Activated naive CD4-positive, alpha-beta T cell treated with anti-CD3 and anti-CD28 coated beads for 36 hours (primary cell): ENCODE measurements at regions of chr10 and their contacts with region 1.

Region 1: GRCh38 chr10:113385021-113385999 is 167.5 kb upstream of the HABP2 start:
- DNase-seq: peak; percentile 72
- H3K4me3 Mint-ChIP-seq: no peak overlapping the region
- H3K27ac Mint-ChIP-seq: no peak overlapping the region
- H3K4me1 Mint-ChIP-seq: peaks cover 23% of the 10 kb centered on the region
- H3K27me3 Mint-ChIP-seq: peaks cover 2% of the 10 kb centered on the region

Region 2: DNA sequence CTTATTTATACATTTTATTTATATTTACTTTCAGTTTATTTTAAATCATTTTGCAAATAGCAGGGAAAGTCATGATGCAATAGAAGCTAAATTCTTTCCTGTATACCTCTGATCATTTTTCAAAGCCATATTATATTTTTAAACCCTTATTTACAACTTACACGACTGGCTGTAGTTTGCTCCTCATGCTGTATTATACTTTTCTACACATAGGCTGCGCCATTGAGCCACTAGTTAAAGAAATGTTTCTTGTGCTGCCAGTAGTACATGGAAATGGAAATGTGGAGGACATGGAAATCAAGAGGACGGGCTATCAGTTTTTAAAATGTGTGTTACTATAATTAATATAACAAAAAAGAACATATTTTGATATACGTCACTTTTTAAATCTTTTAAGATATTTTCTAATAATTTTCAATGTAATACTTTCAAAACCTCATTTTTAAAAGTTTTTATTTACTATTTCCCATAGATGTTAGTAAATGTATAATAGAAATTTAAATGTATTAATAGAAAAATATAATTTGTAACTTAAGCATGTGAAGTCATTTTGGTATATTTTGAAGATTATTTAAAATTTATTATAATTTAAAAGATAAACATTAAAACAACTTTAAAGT is 819.8 kb before region 1 on chr10:
- CTCF ChIA-PET with region 1: no interaction called
- intact Hi-C with region 1: loop called (anchors 1 kb)
- DNase-seq: peak; percentile 36
- H3K4me3 Mint-ChIP-seq: no peak overlapping the region
- H3K27ac Mint-ChIP-seq: no peak overlapping the region
- H3K4me1 Mint-ChIP-seq: no peaks in the 10 kb centered on the region
- H3K27me3 Mint-ChIP-seq: no peaks in the 10 kb centered on the region

Region 3: GRCh38 chr10:112721080-112721698 is 664.1 kb before region 1 on chr10:
- CTCF ChIA-PET with region 1: no interaction called
- intact Hi-C with region 1: loop called (anchors 1 kb)
- DNase-seq: peak; percentile 14
- H3K4me3 Mint-ChIP-seq: no peak overlapping the region
- H3K27ac Mint-ChIP-seq: no peak overlapping the region
- H3K4me1 Mint-ChIP-seq: no peaks in the 10 kb centered on the region
- H3K27me3 Mint-ChIP-seq: no peaks in the 10 kb centered on the region

Region 4: DNA sequence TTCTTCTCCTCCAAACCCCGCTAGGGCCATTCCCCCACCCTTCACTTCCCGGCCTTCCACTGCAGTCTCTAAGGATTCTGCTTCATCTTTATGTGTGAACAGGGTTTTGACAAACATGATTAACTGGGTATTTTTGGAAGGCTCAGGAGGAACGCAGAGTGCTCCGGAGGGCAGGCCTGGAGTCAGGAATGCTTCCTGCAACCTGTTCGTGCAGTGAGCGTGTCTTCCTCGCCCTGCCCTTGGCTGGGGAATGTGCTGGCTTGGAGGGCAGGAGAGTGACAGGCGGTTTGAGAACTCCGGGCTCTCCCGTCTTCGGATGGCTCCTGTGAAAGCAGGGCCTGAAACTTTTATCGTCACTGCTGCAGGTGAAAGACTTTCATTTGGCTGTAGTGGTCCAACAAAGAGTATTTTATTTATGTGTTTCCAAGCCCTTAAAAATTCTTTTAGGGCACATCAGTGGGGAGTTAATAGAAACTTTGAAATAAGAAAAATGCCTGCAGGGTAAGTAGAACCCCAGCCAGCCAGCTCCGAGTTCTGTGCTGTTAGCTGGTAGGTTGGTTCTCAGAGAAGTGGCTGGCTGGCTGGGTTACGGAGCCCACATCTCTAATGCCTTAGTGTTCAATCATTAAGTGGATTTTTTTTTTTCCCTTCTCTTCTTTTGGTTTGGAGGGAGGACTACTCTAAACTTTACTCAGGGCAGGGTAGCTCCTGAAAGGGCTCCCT is 384.3 kb before region 1 on chr10:
- CTCF ChIA-PET with region 1: no interaction called
- intact Hi-C with region 1: no loop called
- DNase-seq: no peak
- H3K4me3 Mint-ChIP-seq: no peak overlapping the region
- H3K27ac Mint-ChIP-seq: no peak overlapping the region
- H3K4me1 Mint-ChIP-seq: no peaks in the 10 kb centered on the region
- H3K27me3 Mint-ChIP-seq: peaks cover 42% of the 10 kb centered on the region

Region 5: DNA sequence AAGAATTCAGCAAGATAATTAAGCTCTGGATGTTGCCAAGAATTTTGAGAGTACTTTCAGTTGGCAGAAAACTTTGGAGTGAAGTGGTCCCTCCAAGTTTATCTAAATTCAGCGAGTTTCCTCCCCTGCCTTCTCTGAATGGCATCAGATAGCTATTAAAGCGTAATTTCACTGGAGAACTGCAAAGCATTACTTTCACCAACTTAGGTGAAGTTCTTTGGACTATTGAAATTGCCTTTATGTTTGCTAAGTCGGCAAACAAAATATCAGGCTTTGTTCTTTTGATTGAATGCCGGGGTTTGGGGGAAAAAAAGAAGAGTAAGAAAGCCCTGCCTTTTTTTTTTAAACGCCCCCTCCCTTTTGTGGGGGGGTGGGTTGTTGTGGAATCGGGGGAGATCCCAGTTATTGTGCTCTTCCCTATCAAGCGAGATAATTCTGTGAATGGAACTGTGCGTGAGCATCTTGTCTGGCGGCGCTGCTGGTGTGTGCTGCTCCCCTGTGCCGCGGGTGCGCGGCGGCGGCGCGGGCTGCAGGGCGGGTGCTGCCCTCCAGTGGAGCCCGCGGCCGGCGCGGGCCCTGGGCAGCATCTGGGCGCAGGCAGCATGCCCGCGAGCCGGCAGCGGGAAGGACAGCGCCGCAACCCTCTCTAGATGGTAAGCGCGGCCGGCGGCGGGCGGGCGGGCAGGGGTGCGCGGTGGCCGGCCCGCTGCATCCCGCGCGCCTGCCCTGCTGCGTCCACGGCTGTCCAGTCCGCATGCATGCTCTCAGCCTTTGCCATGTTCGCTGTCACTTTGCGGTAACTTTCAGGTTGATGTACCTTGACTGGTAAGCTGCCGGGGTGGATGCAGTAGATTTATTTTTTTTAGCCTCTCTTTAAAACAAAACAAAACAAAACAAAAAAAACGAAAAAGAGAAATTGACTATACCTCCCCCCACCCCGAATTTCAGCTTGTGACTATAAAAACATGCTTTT is 258.8 kb before region 1 on chr10:
- CTCF ChIA-PET with region 1: interaction called, 7 read pairs
- intact Hi-C with region 1: loop called (anchors 2 kb)
- DNase-seq: peak; percentile 60
- H3K4me3 Mint-ChIP-seq: no peak overlapping the region
- H3K27ac Mint-ChIP-seq: no peak overlapping the region
- H3K4me1 Mint-ChIP-seq: peaks cover 4% of the 10 kb centered on the region
- H3K27me3 Mint-ChIP-seq: peaks cover 45% of the 10 kb centered on the region

Region 6: GRCh38 chr10:113216102-113216501 is 169.2 kb before region 1 on chr10:
- CTCF ChIA-PET with region 1: interaction called, 8 read pairs
- intact Hi-C with region 1: loop called (anchors 1 kb)
- DNase-seq: no peak
- H3K4me3 Mint-ChIP-seq: no peak overlapping the region
- H3K27ac Mint-ChIP-seq: no peak overlapping the region
- H3K4me1 Mint-ChIP-seq: no peaks in the 10 kb centered on the region
- H3K27me3 Mint-ChIP-seq: peaks cover 23% of the 10 kb centered on the region

Region 7: DNA sequence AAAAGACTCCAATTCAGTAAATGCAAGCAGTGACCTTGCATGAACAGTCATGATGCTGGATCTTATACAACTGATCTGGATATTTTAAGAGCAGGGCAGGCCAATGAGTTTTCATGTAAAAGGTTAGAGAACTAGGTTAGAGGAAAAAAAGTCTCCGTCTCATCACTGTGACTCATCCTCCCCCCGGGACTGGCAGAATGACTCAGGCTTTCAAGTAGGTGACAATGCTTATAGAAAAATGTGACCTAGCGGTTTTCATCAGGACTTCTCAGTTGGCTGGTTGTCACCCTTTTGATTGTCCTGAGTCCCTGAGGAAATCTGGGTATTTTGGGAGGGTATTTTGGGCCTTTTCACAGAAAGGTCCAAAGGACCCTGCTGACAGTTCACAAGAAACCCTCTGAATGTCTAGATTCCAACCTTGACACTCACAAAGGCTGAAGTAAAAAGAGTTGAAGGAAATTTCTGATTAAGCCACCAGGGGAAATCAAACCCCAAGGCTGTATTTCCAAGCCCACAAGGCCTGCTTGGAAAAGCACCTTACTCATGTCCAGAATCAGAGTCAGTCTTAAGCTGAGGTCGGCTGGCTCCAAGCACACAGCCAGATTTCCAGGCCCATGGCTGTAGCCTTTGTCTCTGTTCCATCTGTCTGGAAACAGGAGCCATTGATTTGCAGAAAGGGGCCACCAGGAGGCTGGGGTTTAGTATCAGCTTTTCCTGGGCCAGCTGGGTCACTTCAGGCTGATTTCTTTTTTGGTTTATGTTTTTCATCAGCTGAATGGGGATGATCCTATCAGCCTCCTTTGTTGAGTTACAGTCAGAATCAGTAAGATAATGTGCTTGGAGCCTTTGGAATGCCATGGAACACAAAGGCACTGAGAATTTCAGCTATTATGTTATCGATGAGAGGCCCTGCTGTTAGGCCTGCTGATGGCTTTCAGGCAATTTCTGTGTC is 58.9 kb before region 1 on chr10:
- CTCF ChIA-PET with region 1: no interaction called
- intact Hi-C with region 1: no loop called
- DNase-seq: peak; percentile 64
- H3K4me3 Mint-ChIP-seq: no peak overlapping the region
- H3K27ac Mint-ChIP-seq: no peak overlapping the region
- H3K4me1 Mint-ChIP-seq: peaks cover 6% of the 10 kb centered on the region
- H3K27me3 Mint-ChIP-seq: peaks cover 9% of the 10 kb centered on the region

Region 8: GRCh38 chr10:113521123-113521795 is 135.9 kb after region 1 on chr10:
- CTCF ChIA-PET with region 1: interaction called, 4 read pairs
- intact Hi-C with region 1: loop called (anchors 5 kb)
- DNase-seq: peak; percentile 58
- H3K4me3 Mint-ChIP-seq: no peak overlapping the region
- H3K27ac Mint-ChIP-seq: no peak overlapping the region
- H3K4me1 Mint-ChIP-seq: no peaks in the 10 kb centered on the region
- H3K27me3 Mint-ChIP-seq: peaks cover 8% of the 10 kb centered on the region

Region 9: DNA sequence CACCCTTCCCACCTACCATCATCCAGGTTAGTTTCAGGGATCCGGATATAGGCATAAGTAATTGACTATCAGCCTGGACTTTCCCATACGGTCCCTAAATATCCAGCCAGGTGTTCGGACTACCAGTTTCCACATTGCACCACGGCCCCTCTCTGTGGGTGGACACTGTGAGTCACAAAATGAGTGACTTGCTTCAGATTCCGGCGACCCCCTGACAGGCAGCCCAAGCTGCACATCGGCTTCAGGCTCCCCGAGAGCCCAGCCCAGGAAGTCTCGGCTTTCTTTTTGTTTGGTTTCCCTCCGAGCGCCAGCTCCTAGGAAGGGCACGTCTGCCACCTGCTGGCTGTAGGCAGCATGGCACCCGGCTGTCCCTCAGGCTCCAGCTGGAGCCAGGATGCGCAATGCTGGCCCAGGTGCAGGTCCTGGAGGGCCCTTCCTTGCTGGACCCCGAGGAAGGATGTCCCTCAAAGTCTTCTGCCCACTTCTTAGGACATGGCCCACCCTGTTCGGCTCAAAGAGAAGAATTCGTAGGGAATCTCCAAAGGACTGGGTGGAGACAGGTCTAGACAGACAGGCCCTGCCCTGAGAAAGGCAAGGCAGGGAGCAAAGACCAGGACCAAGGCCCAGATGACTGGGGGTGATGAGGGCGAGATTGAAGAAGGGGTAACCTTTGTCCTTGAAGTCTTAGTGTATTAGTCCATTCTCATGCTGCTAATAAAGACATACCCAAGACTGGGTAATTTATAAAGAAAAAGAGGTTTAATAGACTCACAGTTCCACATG is 178.2 kb after region 1 on chr10:
- CTCF ChIA-PET with region 1: no interaction called
- intact Hi-C with region 1: loop called (anchors 2 kb)
- DNase-seq: peak; percentile 81
- H3K4me3 Mint-ChIP-seq: peak overlapping the region; percentile 57
- H3K27ac Mint-ChIP-seq: no peak overlapping the region
- H3K4me1 Mint-ChIP-seq: peaks cover 2% of the 10 kb centered on the region
- H3K27me3 Mint-ChIP-seq: no peaks in the 10 kb centered on the region